Activated naive CD4-positive, alpha-beta T cell treated with anti-CD3 and anti-CD28 coated beads for 36 hours (primary cell): ENCODE measurements at regions of chr13 and their contacts with region 1.

Region 1: GRCh38 chr13:74158028-74158427 is 23.8 kb upstream of the KLF12 start:
- DNase-seq: no peak
- H3K4me3 Mint-ChIP-seq: no peak overlapping the region
- H3K27ac Mint-ChIP-seq: no peak overlapping the region
- H3K4me1 Mint-ChIP-seq: peaks cover 5% of the 10 kb centered on the region
- H3K27me3 Mint-ChIP-seq: no peaks in the 10 kb centered on the region

Region 2: DNA sequence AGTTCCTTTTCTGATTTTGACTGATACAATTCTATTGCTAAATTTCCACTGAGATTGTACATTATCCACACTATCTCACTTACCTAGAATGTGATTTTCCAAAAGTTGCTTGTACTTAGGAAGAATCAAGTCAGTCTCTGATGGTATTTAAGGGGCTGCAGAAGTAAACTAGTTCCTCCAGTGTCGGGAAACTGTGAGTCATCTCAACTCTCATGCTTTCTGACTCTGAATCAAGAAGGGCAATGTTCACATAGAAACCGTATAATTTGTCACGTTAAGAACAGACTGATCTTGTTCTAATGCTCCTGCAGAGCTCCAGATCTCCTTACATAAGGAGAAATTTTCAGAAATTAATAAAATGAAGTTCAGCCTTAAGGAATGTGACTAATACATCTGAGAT is 729.9 kb before region 1 on chr13:
- CTCF ChIA-PET with region 1: no interaction called
- intact Hi-C with region 1: no loop called
- DNase-seq: no peak
- H3K4me3 Mint-ChIP-seq: no peak overlapping the region
- H3K27ac Mint-ChIP-seq: no peak overlapping the region
- H3K4me1 Mint-ChIP-seq: no peaks in the 10 kb centered on the region
- H3K27me3 Mint-ChIP-seq: no peaks in the 10 kb centered on the region

Region 3: DNA sequence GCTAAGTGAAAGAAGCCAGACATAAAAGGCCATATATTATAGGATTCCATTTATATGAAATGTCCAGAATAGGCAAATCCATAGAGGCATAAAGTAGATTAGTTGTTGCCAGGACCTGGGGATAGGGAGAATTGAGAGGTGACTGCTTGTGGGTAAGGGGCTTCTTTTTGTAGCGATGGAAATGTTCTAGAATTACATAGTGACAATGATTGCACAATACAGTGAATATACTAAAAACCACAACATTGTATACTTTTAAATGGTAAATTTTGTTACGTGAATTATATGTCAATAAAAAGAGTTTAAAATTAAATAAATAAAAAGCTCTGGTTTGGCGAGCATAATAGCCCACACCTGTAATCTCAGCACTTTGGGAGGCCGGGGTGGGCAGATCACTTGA is 510.6 kb before region 1 on chr13:
- CTCF ChIA-PET with region 1: no interaction called
- intact Hi-C with region 1: no loop called
- DNase-seq: no peak
- H3K4me3 Mint-ChIP-seq: no peak overlapping the region
- H3K27ac Mint-ChIP-seq: no peak overlapping the region
- H3K4me1 Mint-ChIP-seq: no peaks in the 10 kb centered on the region
- H3K27me3 Mint-ChIP-seq: no peaks in the 10 kb centered on the region

Region 4: DNA sequence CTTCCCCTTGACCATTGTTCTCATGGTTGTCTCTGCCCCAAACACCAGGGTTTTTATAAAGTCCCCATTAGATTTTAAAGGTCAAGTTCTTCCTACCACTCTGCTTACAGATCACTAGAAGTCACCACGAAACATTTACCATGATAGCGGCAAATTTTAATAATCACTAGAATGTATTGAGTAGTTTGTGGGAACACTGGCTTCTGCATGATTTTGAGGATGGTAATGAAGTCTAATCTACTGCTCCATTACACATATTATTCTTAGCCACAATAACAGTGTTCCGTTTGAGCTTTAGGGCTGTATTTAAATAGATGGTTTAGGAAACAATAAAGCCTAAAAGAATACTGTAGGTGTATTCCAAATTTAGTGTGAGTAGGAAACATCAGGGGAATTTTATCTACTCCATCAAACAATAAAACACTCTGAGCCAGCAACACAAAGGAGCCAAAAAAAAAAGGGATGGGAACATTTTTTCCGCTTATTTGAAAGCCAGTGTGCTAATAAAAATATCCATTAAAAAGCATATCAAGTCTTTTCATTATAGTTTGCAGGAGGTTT is 73.6 kb before region 1 on chr13:
- CTCF ChIA-PET with region 1: no interaction called
- intact Hi-C with region 1: no loop called
- DNase-seq: no peak
- H3K4me3 Mint-ChIP-seq: no peak overlapping the region
- H3K27ac Mint-ChIP-seq: no peak overlapping the region
- H3K4me1 Mint-ChIP-seq: peaks cover 65% of the 10 kb centered on the region
- H3K27me3 Mint-ChIP-seq: no peaks in the 10 kb centered on the region

Region 5: GRCh38 chr13:74098077-74098476 is 60.0 kb before region 1 on chr13:
- CTCF ChIA-PET with region 1: no interaction called
- intact Hi-C with region 1: no loop called
- DNase-seq: no peak
- H3K4me3 Mint-ChIP-seq: no peak overlapping the region
- H3K27ac Mint-ChIP-seq: no peak overlapping the region
- H3K4me1 Mint-ChIP-seq: peaks cover 62% of the 10 kb centered on the region
- H3K27me3 Mint-ChIP-seq: no peaks in the 10 kb centered on the region

Region 6: DNA sequence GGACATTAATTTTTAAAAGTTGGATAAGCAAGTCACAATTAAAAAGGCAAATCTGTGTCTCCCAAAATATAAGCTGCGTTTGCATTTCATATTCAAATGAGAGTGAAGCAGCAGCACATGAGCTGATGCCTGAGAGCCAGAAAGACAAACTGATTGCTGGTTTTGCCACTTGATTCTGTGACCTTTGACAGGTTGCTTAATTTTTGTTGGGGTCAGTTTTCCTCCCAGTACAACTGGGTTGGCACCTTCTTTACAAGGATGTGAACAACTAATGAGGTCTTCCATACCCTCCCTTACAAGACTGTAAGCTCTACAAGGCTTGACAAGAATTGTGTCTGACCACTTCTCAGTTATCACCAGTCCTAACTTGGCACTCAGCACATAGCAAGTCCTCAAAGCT is 15.8 kb before region 1 on chr13:
- CTCF ChIA-PET with region 1: interaction called, 3 read pairs
- intact Hi-C with region 1: loop called (anchors 2 kb)
- DNase-seq: no peak
- H3K4me3 Mint-ChIP-seq: no peak overlapping the region
- H3K27ac Mint-ChIP-seq: no peak overlapping the region
- H3K4me1 Mint-ChIP-seq: peaks cover 7% of the 10 kb centered on the region
- H3K27me3 Mint-ChIP-seq: no peaks in the 10 kb centered on the region